ENCODE measurements at regions of chr17 and their contacts with region 1.

Region 1: GRCh38 chr17:67855504-67856324 is 30.4 kb downstream of the BPTF start:
- DNase-seq: no peak

Region 2: GRCh38 chr17:67942810-67943209 is 87.1 kb after region 1 on chr17:
- CTCF ChIA-PET with region 1: interaction called, 10 read pairs
- POLR2A ChIA-PET with region 1: no interaction called
- DNase-seq: peak; percentile 30

Measured in HEK293T (cell line).